Activated T-helper 2 cell treated with anti-CD3 and anti-CD28 coated beads, Interferon-gamma antibody, Interleukin-2, Interleukin-4, amounts not matched to agents 10 μg/mL and 5 μg/mL and 100 μg/mL, durations not matched to agents 14 hours and 24 hours and 36 hours (primary cell): ENCODE measurements at regions of chr13 and their contacts with region 1.

Region 1: GRCh38 chr13:45417790-45418534 is at the start of gene SLC25A30:
- DNase-seq: peak; percentile 82
- H3K4me3 Mint-ChIP-seq: peak within 1 kb of the TSS; percentile 88
- H3K27ac Mint-ChIP-seq: peak within 1 kb of the TSS; percentile 87
- H3K4me1 Mint-ChIP-seq: peaks cover 12% of the 10 kb centered on the region
- H3K27me3 Mint-ChIP-seq: no peaks in the 10 kb centered on the region
- total RNA-seq, gene SLC25A30: 12.2 and 13.6 TPM in 2 replicates

Region 2: GRCh38 chr13:45464687-45465453 is 46.9 kb after region 1 on chr13 and contains the start of gene COG3:
- intact Hi-C with region 1: loop called (anchors 1 kb)
- DNase-seq: peak; percentile 94
- H3K4me3 Mint-ChIP-seq: peak within 1 kb of the TSS; percentile 91
- H3K27ac Mint-ChIP-seq: peak within 1 kb of the TSS; percentile 83
- H3K4me1 Mint-ChIP-seq: peaks cover 28% of the 10 kb centered on the region
- H3K27me3 Mint-ChIP-seq: peaks cover 3% of the 10 kb centered on the region
- total RNA-seq, gene COG3: 21.3 and 22.5 TPM in 2 replicates